MCF 10A (cell line): ENCODE measurements at regions of chr1 and their contacts with region 1.

Region 1: GRCh38 chr1:179164494-179164893 is 65.0 kb downstream of the ABL2 start:
- DNase-seq: peak; percentile 47
- H3K4me3 Mint-ChIP-seq: no peak overlapping the region
- H3K27ac Mint-ChIP-seq: no peak overlapping the region
- H3K4me1 Mint-ChIP-seq: peaks cover 12% of the 10 kb centered on the region
- H3K27me3 Mint-ChIP-seq: no peaks in the 10 kb centered on the region
- CTCF ChIP-seq: no peak

Region 2: GRCh38 chr1:178388418-178389145 is 775.9 kb before region 1 on chr1:
- CTCF ChIA-PET with region 1: no interaction called
- POLR2A ChIA-PET with region 1: no interaction called
- intact Hi-C with region 1: no loop called
- DNase-seq: no peak
- H3K4me3 Mint-ChIP-seq: no peak overlapping the region
- H3K27ac Mint-ChIP-seq: no peak overlapping the region
- H3K4me1 Mint-ChIP-seq: peaks cover 16% of the 10 kb centered on the region
- H3K27me3 Mint-ChIP-seq: no peaks in the 10 kb centered on the region
- CTCF ChIP-seq: no peak

Region 3: GRCh38 chr1:179025125-179025974 is 139.1 kb before region 1 on chr1 and contains the start of gene FAM20B:
- CTCF ChIA-PET with region 1: no interaction called
- POLR2A ChIA-PET with region 1: no interaction called
- intact Hi-C with region 1: no loop called
- DNase-seq: peak; percentile 94
- H3K4me3 Mint-ChIP-seq: peak within 1 kb of the TSS; percentile 82
- H3K27ac Mint-ChIP-seq: peak within 1 kb of the TSS; percentile 68
- H3K4me1 Mint-ChIP-seq: peaks cover 31% of the 10 kb centered on the region
- H3K27me3 Mint-ChIP-seq: no peaks in the 10 kb centered on the region
- CTCF ChIP-seq: no peak
- total RNA-seq, gene FAM20B: 44.2 and 45.0 TPM in 2 replicates

Region 4: DNA sequence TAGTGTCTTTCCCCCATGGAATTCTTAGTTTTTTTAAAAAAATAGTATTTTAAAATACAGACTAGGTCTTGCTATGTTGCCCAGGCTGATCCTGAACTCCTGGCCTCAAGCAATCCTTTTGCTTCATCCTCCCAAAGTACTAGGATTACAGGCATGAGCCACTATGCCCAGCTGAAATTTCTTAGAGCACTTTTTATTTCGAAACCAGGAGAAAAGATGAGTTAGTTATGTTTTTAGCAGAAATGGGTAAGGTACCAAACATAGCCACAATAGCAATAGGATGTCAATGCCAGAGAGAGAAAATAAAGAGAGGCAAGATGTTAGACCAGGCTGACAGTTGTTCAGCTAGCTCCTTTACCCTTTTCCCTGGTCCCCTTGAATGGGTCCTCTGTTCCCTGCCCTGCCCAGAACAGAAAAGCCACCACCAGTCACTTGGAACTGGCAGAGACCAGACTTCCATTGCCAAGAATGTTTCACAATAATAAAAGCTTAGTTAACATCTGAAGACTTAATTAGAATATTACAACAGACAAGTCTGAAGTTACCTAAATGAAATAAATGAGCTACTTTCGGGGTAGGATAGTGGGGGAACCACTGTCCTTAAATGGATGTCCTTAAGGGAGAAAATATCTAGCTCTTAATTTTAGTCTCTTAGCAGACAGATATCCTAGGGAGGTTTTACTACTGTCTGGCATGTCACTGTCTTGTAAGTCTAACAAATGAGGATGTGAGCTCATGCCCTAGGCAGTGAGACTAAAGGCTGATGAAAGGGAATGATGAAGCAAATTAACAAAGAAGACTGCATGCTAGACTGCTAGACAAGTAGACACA is 10.7 kb after region 1 on chr1:
- CTCF ChIA-PET with region 1: interaction called, 3 read pairs
- POLR2A ChIA-PET with region 1: interaction called, 12 read pairs
- intact Hi-C with region 1: no loop called
- DNase-seq: peak; percentile 74
- H3K4me3 Mint-ChIP-seq: peak overlapping the region; percentile 21
- H3K27ac Mint-ChIP-seq: peak overlapping the region; percentile 84
- H3K4me1 Mint-ChIP-seq: peaks cover 24% of the 10 kb centered on the region
- H3K27me3 Mint-ChIP-seq: no peaks in the 10 kb centered on the region
- CTCF ChIP-seq: no peak